Thyroid gland (tissue), 4 donors: ENCODE measurements at regions of chr10 and their contacts with region 1.

Region 1: DNA sequence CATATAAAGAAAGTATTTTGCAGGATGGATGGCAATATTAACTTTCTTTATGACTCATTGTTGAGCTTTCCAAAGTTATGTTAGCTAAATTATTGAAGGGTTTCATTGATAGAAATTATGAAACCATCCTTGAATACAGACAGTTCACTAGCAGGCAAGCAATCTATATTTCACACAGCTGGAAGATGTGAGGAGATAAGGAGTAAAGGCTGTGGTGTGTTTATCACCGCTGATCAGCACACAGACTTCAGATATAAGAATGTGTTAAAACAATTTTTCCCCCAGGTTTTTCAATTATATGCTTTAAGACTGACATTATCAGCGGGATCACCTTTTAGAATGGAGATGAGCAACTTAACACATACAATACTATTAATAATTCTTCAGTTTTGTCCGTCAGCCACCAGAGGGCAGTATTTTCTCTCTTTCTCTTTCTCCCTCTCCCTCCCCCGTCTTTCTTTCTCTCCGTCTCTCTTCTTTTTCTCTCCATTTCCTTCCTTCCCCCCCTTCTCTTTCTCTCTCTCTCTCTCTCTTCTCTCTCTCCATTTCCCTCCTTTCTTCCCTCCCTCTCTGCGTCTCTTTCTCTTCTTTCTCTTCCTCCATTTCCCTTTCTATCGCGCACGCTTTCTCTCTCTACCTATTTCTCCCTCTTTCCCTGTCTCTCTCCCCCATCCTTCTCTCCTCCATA is 62.9 kb upstream of the FAM171A1 start:
- DNase-seq: peak in 1 of 2 donors; percentile 5
- H3K4me3 ChIP-seq: no peak overlapping the region
- H3K27ac ChIP-seq: no peak overlapping the region
- H3K4me1 ChIP-seq: peaks cover 0 to 3% of the 10 kb centered on the region in 2 donors
- H3K27me3 ChIP-seq: no peaks in the 10 kb centered on the region
- CTCF ChIP-seq: peak in 5 of 6 experiments; percentile 53 to 83 (median 73)
- POLR2A ChIP-seq: no peak

Region 2: GRCh38 chr10:15725603-15726002 is 291.6 kb after region 1 on chr10:
- intact Hi-C with region 1: loop called (anchors 5 kb)
- DNase-seq: no peak
- H3K4me3 ChIP-seq: no peak overlapping the region
- H3K27ac ChIP-seq: no peak overlapping the region
- H3K4me1 ChIP-seq: no peaks in the 10 kb centered on the region
- H3K27me3 ChIP-seq: no peaks in the 10 kb centered on the region
- CTCF ChIP-seq: peak in 3 of 6 experiments; percentile 15 to 37 (median 26)
- POLR2A ChIP-seq: no peak